B cell (primary cell): ENCODE measurements at regions of chr13 and their contacts with region 1.

Region 1: DNA sequence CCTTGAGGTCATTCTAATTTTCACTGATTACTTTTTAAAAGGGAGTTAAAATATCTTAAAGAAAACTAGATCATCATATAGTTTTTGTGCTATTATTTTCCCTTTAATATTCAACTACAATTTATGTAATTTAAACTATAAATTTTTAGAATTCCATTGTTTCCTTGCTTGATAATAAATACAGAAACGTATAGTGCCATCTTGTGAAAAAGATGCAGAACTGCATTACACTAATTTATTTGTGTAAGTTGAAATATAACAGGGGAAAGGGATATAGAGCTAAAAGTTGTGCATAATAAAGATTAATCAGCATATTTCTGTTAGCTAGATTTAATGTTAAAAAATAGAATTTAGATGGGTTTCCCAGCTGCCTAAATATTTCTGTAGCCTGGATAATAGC is 61.5 kb upstream of the TDRD3 start:
- DNase-seq: no peak
- ATAC-seq: no peak
- H3K4me3 ChIP-seq: no peak overlapping the region
- H3K4me3 Mint-ChIP-seq: no peak overlapping the region
- H3K27ac ChIP-seq: no peak overlapping the region
- H3K27ac Mint-ChIP-seq: no peak overlapping the region
- H3K4me1 ChIP-seq: no peaks in the 10 kb centered on the region
- H3K4me1 Mint-ChIP-seq: no peaks in the 10 kb centered on the region
- H3K27me3 ChIP-seq: peaks cover 0 to 8% (median 3%) of the 10 kb centered on the region in 4 experiments
- H3K27me3 Mint-ChIP-seq: peaks cover 22% of the 10 kb centered on the region
- CTCF ChIP-seq: peak; percentile 72

Region 2: DNA sequence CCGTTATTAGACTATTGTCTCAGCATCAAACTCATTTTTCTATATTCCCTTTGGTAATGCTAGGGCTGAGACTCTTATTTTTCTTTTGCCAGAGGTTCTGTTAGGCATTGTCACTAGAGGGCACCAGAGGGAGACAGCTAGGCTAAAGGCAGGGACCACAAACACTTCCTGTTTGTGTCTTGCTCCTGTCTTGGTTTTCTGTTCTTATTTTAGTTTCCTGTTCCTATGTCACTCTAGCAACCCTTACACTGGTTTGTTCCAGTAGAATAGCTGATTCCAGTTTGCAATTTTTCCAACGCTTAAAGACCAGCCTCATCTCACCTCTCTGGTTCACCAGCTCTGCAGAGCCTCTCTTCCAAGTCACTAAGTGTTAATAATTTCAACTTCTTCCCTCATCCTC is 943.8 kb before region 1 on chr13:
- CTCF ChIA-PET with region 1: no interaction called
- POLR2A ChIA-PET with region 1: no interaction called
- intact Hi-C with region 1: loop called (anchors 10 kb)
- DNase-seq: peak; percentile 64
- ATAC-seq: peak; percentile 67
- H3K4me3 ChIP-seq: no peak overlapping the region
- H3K4me3 Mint-ChIP-seq: no peak overlapping the region
- H3K27ac ChIP-seq: no peak overlapping the region
- H3K27ac Mint-ChIP-seq: no peak overlapping the region
- H3K4me1 ChIP-seq: peaks cover 11% of the 10 kb centered on the region in 2 donors
- H3K4me1 Mint-ChIP-seq: no peaks in the 10 kb centered on the region
- H3K27me3 ChIP-seq: no peaks in the 10 kb centered on the region
- H3K27me3 Mint-ChIP-seq: peaks cover 4% of the 10 kb centered on the region
- CTCF ChIP-seq: peak; percentile 71

Region 3: GRCh38 chr13:59677966-59678814 is 657.3 kb before region 1 on chr13:
- CTCF ChIA-PET with region 1: no interaction called
- POLR2A ChIA-PET with region 1: no interaction called
- intact Hi-C with region 1: loop called (anchors 5 kb)
- DNase-seq: peak; percentile 5
- ATAC-seq: no peak
- H3K4me3 ChIP-seq: no peak overlapping the region
- H3K4me3 Mint-ChIP-seq: no peak overlapping the region
- H3K27ac ChIP-seq: no peak overlapping the region
- H3K27ac Mint-ChIP-seq: no peak overlapping the region
- H3K4me1 ChIP-seq: no peaks in the 10 kb centered on the region
- H3K4me1 Mint-ChIP-seq: peaks cover under 1% of the 10 kb centered on the region
- H3K27me3 ChIP-seq: no peaks in the 10 kb centered on the region
- H3K27me3 Mint-ChIP-seq: no peaks in the 10 kb centered on the region
- CTCF ChIP-seq: peak; percentile 50